MCF 10A (cell line): ENCODE measurements at regions of chrX and their contacts with region 1.

Region 1: GRCh38 chrX:49922291-49923241 is at the start of gene CLCN5:
- DNase-seq: peak; percentile 88
- H3K4me3 Mint-ChIP-seq: peak within 1 kb of the TSS; percentile 77
- H3K27ac Mint-ChIP-seq: peak within 1 kb of the TSS; percentile 79
- H3K4me1 Mint-ChIP-seq: no peaks in the 10 kb centered on the region
- H3K27me3 Mint-ChIP-seq: peaks cover 30% of the 10 kb centered on the region
- CTCF ChIP-seq: no peak
- total RNA-seq, gene CLCN5: 4.9 and 6.7 TPM in 2 replicates

Region 2: GRCh38 chrX:49300703-49301102 is 621.9 kb before region 1 on chrX:
- CTCF ChIA-PET with region 1: no interaction called
- POLR2A ChIA-PET with region 1: no interaction called
- intact Hi-C with region 1: no loop called
- DNase-seq: no peak
- H3K4me3 Mint-ChIP-seq: no peak overlapping the region
- H3K27ac Mint-ChIP-seq: no peak overlapping the region
- H3K4me1 Mint-ChIP-seq: no peaks in the 10 kb centered on the region
- H3K27me3 Mint-ChIP-seq: peaks cover 42% of the 10 kb centered on the region
- CTCF ChIP-seq: no peak

Region 3: GRCh38 chrX:49792376-49792775 is 130.2 kb before region 1 on chrX:
- CTCF ChIA-PET with region 1: no interaction called
- POLR2A ChIA-PET with region 1: no interaction called
- intact Hi-C with region 1: no loop called
- DNase-seq: no peak
- H3K4me3 Mint-ChIP-seq: no peak overlapping the region
- H3K27ac Mint-ChIP-seq: no peak overlapping the region
- H3K4me1 Mint-ChIP-seq: no peaks in the 10 kb centered on the region
- H3K27me3 Mint-ChIP-seq: no peaks in the 10 kb centered on the region
- CTCF ChIP-seq: no peak

Region 4: DNA sequence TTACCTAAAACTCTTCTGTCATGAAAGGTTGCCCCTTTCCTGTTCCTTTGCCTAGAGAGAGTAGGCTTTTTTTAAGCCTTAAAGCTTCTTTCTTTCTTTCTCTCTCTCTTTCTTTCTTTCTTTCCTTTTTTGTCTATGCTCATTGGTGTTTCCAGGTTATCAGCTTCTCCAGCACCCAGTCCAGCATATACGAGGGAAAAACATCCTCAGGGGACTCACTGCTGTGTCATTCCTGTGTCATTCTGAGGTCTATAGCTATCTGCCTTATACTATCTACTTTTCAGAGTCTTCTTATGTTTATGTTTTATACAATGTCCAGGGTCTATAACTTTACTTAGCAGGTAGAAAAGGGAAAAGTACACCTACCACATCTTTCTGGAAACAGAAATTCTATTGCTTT is 53.8 kb before region 1 on chrX:
- CTCF ChIA-PET with region 1: no interaction called
- POLR2A ChIA-PET with region 1: no interaction called
- intact Hi-C with region 1: no loop called
- DNase-seq: no peak
- H3K4me3 Mint-ChIP-seq: no peak overlapping the region
- H3K27ac Mint-ChIP-seq: no peak overlapping the region
- H3K4me1 Mint-ChIP-seq: no peaks in the 10 kb centered on the region
- H3K27me3 Mint-ChIP-seq: peaks cover 58% of the 10 kb centered on the region
- CTCF ChIP-seq: no peak

Region 5: DNA sequence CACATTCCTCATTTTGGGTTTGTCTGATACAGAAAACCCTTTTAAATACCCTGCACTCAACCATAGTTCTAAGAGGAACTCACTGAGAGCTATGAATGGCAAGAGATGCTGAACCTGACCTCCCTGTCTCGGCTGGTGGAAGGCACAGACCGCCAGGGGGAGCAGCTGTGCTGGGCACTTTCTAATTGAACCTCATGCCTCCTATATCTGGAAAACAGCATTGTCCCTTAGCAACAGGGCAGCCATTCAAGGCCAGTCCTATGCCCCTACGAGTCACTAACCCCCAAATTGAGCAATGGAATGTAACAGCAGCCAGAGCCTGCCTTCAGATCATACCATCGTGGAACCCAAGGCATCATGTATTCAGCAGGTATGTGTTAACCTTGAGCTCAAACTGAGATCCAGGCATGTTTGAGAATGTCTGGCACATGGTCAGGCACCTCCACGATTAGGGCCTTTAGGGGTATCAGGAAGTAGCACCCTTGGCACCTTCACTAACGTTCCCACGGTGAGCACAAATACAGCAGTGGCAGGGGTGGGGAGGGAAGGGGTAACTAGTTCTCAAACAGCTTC is 38.2 kb before region 1 on chrX:
- CTCF ChIA-PET with region 1: interaction called, 38 read pairs
- POLR2A ChIA-PET with region 1: interaction called, 9 read pairs
- intact Hi-C with region 1: loop called (anchors 5 kb)
- DNase-seq: peak; percentile 62
- H3K4me3 Mint-ChIP-seq: no peak overlapping the region
- H3K27ac Mint-ChIP-seq: no peak overlapping the region
- H3K4me1 Mint-ChIP-seq: peaks cover 4% of the 10 kb centered on the region
- H3K27me3 Mint-ChIP-seq: peaks cover 26% of the 10 kb centered on the region
- CTCF ChIP-seq: peak; percentile 69

Region 6: DNA sequence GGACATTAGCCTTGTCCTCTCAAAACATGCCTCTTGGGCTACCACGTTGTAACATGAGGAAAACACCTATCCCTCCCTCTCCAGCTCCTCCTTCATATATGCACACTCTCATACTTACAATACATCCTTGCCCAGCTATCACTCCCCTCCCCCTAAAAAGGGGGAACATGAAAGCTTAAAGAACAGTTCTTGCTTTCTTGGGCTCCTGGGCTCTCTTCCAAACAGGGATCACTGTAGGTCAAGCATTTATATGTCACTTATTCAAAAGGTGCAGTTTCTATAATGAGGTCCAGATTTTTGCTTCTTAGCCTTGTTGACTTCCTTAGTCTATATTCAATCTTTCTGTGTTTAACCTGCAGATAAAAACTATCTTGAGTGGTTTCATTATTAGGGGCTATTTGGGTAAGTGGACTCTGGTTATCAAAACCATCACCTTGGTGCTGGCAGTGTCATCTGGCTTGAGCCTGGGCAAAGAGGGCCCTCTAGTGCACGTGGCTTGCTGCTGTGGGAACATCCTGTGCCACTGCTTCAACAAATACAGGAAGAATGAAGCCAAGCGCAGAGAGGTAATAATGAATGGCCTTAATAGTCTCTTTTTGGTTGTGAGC is 158.8 kb after region 1 on chrX:
- CTCF ChIA-PET with region 1: interaction called, 3 read pairs
- POLR2A ChIA-PET with region 1: no interaction called
- intact Hi-C with region 1: loop called (anchors 2 kb)
- DNase-seq: peak; percentile 23
- H3K4me3 Mint-ChIP-seq: no peak overlapping the region
- H3K27ac Mint-ChIP-seq: no peak overlapping the region
- H3K4me1 Mint-ChIP-seq: no peaks in the 10 kb centered on the region
- H3K27me3 Mint-ChIP-seq: peaks cover 58% of the 10 kb centered on the region
- CTCF ChIP-seq: peak; percentile 8

Region 7: GRCh38 chrX:50579955-50580354 is 657.4 kb after region 1 on chrX:
- CTCF ChIA-PET with region 1: interaction called, 50 read pairs
- POLR2A ChIA-PET with region 1: no interaction called
- intact Hi-C with region 1: loop called (anchors 1 kb)
- DNase-seq: peak; percentile 79
- H3K4me3 Mint-ChIP-seq: no peak overlapping the region
- H3K27ac Mint-ChIP-seq: no peak overlapping the region
- H3K4me1 Mint-ChIP-seq: no peaks in the 10 kb centered on the region
- H3K27me3 Mint-ChIP-seq: peaks cover 68% of the 10 kb centered on the region
- CTCF ChIP-seq: peak; percentile 68